ENCODE measurements at regions of chr10 and their contacts with region 1.

Region 1: GRCh38 chr10:17062955-17063484 is 66.6 kb downstream of the CUBN start:
- DNase-seq: peak; percentile 86
- ATAC-seq: peak; percentile 55
- H3K4me3 ChIP-seq: no peak overlapping the region
- H3K27ac ChIP-seq: peak overlapping the region; percentile 68
- H3K4me1 ChIP-seq: peaks cover 19% of the 10 kb centered on the region
- H3K27me3 ChIP-seq: no peaks in the 10 kb centered on the region
- CTCF ChIP-seq: no peak
- POLR2A ChIP-seq: 0 out of 2 replicates have a peak, but pooled peaks have one; percentile 45
- RAD21 ChIP-seq: peak; percentile 39

Region 2: DNA sequence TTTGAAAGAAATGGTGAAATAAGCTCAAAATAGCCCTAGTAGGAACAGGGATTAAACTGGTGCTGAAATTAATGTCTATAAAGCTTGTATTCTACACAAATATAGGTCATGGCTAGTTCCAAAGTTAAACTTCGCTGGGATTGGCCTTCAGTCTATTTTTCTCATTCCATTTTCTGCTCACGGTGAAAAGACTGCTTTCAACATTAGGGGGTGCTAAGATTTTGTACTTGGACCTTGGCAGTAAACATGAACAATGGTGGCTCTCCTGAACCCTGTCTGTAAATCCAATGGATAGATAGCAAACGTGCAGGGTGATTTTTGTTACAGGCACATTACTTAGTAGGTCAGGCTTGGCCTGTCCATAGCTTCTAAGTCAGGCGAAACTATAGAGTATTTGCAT is 209.8 kb before region 1 on chr10:
- CTCF ChIA-PET with region 1: interaction called, 3 read pairs
- POLR2A ChIA-PET with region 1: no interaction called
- dilution Hi-C with region 1: no loop called
- in situ Hi-C with region 1: no loop called
- intact Hi-C with region 1: loop called (anchors 2 kb)
- DNase-seq: peak; percentile 68
- ATAC-seq: peak; percentile 80
- H3K4me3 ChIP-seq: no peak overlapping the region
- H3K27ac ChIP-seq: no peak overlapping the region
- H3K4me1 ChIP-seq: peaks cover 3% of the 10 kb centered on the region
- H3K27me3 ChIP-seq: no peaks in the 10 kb centered on the region
- CTCF ChIP-seq: peak; percentile 76
- POLR2A ChIP-seq: no peak
- RAD21 ChIP-seq: peak; percentile 82

Region 3: DNA sequence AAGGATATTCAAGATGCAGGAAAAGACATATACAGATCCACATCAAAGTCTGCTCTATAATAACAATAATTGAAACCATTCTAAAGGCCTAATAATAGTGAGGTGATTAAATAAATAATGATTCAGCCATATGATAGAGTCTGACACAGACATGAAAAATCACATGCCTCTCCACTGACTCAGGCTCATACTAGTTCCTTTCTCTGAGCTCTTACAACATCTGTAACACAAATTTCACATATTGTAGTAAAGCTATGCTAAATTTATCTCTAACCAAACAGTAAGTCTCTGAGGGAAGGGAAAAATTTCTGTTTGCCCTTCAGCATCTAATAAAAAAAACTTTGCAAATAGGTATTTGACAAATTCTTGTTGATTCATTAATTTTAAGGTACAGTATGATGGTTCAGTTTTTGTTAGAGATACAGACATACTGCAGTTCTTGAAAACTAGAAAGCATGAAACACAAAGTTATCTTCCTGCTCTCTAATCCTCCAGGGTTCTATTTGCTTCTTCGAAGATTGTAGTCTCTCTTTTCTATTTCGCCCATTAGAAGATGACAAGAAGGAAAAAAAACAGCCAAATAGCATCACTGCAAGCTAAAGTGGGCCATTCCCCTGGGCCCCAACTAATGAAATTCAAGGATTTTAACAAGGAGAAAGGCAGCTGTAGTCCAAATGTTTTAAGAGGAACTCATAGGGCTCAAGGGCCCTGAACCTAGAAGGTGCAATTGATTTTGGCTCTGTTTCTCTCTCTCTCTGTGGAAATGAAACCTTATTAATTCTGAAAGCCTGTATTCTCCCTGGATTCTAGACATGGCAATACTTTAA is 12.7 kb after region 1 on chr10:
- CTCF ChIA-PET with region 1: interaction called, 4 read pairs
- POLR2A ChIA-PET with region 1: interaction called, 3 read pairs
- dilution Hi-C with region 1: no loop called
- in situ Hi-C with region 1: no loop called
- intact Hi-C with region 1: loop called (anchors 1 kb)
- DNase-seq: peak; percentile 96
- ATAC-seq: peak; percentile 88
- H3K4me3 ChIP-seq: no peak overlapping the region
- H3K27ac ChIP-seq: peak overlapping the region; percentile 78
- H3K4me1 ChIP-seq: peaks cover 15% of the 10 kb centered on the region
- H3K27me3 ChIP-seq: no peaks in the 10 kb centered on the region
- CTCF ChIP-seq: no peak
- POLR2A ChIP-seq: no peak
- RAD21 ChIP-seq: 0 out of 2 replicates have a peak, but pooled peaks have one; percentile 10

Region 4: DNA sequence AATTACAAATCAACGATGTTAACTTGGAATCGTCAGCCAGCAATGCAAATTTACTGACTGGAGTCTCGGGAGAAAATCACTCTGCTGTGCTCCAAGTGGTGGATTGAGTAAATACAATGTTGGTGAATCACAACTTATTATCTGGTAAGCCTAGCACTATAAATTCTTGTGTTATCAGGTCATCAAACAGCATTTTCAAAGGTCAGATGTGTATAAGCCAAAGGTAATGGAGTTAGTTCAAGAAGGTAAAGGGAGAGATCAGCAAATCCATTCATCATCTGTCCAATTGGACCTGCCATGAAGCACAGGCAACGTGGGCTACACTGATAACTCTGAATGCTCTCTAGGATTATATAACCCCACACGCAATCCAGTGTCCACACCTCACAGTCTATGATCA is 52.7 kb after region 1 on chr10:
- CTCF ChIA-PET with region 1: no interaction called
- POLR2A ChIA-PET with region 1: no interaction called
- dilution Hi-C with region 1: no loop called
- in situ Hi-C with region 1: no loop called
- intact Hi-C with region 1: no loop called
- DNase-seq: peak; percentile 51
- ATAC-seq: peak; percentile 75
- H3K4me3 ChIP-seq: no peak overlapping the region
- H3K27ac ChIP-seq: no peak overlapping the region
- H3K4me1 ChIP-seq: peaks cover 6% of the 10 kb centered on the region
- H3K27me3 ChIP-seq: no peaks in the 10 kb centered on the region
- CTCF ChIP-seq: peak; percentile 19; the same call in 1 of the 2 replicates
- POLR2A ChIP-seq: no peak
- RAD21 ChIP-seq: no peak; the same call in 1 of the 2 replicates

Region 5: DNA sequence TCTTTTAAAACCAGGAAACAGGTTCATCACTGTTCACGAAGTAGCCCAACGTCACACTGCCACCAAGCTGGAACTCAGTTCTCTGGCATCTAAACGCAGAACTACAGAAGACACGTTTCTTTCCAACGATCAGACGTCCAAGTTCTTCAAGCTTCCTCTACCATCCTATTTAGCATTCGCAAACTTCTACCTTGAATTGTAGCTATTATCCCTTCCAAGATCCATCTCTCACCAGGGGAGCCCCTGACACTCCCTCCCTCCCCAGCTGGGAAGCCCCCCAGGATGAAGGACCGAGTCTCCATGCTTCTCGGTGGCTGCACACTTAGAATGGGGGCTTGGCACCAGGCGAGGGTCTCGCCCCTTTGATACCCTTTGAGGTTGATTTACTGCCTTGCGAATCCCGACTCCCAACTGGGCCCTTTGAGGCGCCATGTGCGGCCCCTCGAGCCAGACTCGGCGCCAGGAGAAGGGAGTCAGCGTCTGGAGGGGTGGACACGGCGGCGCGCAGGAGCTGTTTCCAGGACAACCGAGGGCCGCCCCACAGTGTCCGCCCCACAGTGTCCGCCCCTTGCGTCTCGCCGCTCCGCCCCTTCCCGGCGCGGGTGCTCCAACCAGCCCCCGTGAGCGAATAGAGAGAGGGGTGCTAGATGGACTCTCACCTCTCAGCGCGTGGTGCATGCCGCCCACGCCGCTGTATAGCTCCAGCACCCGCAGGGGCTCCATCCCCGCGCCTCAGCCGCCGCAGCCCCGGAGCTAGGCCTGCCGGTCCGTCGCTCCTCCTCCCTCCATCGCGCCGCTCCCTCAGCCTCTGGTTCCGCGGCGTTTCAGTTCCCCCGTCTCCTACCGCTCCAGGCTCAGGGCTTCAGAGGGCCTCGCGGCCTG is 138.1 kb after region 1 on chr10 and contains the start of gene TRDMT1:
- CTCF ChIA-PET with region 1: no interaction called
- POLR2A ChIA-PET with region 1: interaction called, 3 read pairs
- dilution Hi-C with region 1: no loop called
- in situ Hi-C with region 1: no loop called
- intact Hi-C with region 1: loop called (anchors 1 kb)
- DNase-seq: peak; percentile 86
- ATAC-seq: peak; percentile 98
- H3K4me3 ChIP-seq: peak within 1 kb of the TSS; percentile 74
- H3K27ac ChIP-seq: peak within 1 kb of the TSS; percentile 93
- H3K4me1 ChIP-seq: peaks cover 6% of the 10 kb centered on the region; the same call in 1 of the 2 replicates
- H3K27me3 ChIP-seq: no peaks in the 10 kb centered on the region
- CTCF ChIP-seq: no peak
- POLR2A ChIP-seq: peak; percentile 83
- RAD21 ChIP-seq: peak; percentile 34
- total RNA-seq, gene TRDMT1: 4.7 and 6.7 TPM in 2 replicates

Region 6: GRCh38 chr10:17292375-17292774 is 229.4 kb after region 1 on chr10:
- CTCF ChIA-PET with region 1: no interaction called
- POLR2A ChIA-PET with region 1: no interaction called
- dilution Hi-C with region 1: no loop called
- in situ Hi-C with region 1: no loop called
- intact Hi-C with region 1: no loop called
- DNase-seq: no peak
- ATAC-seq: no peak
- H3K4me3 ChIP-seq: no peak overlapping the region
- H3K27ac ChIP-seq: no peak overlapping the region
- H3K4me1 ChIP-seq: no peaks in the 10 kb centered on the region
- H3K27me3 ChIP-seq: peaks cover 8% of the 10 kb centered on the region
- CTCF ChIP-seq: no peak
- POLR2A ChIP-seq: no peak
- RAD21 ChIP-seq: no peak

Measured in IMR-90 (cell line).